ENCODE measurements at regions of chr7 and their contacts with region 1.

Region 1: GRCh38 chr7:142568435-142569097 is 180.7 kb upstream of the PRSS1 start:
- DNase-seq: peak in 1 of 2 experiments; percentile 77
- H3K4me3 ChIP-seq: no peak overlapping the region
- H3K27ac ChIP-seq: peak overlapping the region; percentile 52
- H3K4me1 ChIP-seq: peaks cover 38% of the 10 kb centered on the region
- H3K27me3 ChIP-seq: no peaks in the 10 kb centered on the region
- CTCF ChIP-seq: no peak

Region 2: GRCh38 chr7:142587578-142588191 is 19.1 kb after region 1 on chr7:
- CTCF ChIA-PET with region 1: interaction called, 11 read pairs
- POLR2A ChIA-PET with region 1: no interaction called
- intact Hi-C with region 1: no loop called
- DNase-seq: peak; percentile 30 to 77
- H3K4me3 ChIP-seq: no peak overlapping the region
- H3K27ac ChIP-seq: 0 out of 2 replicates have a peak overlapping the region, but pooled peaks have one; percentile 27
- H3K4me1 ChIP-seq: peaks cover 26% of the 10 kb centered on the region
- H3K27me3 ChIP-seq: no peaks in the 10 kb centered on the region
- CTCF ChIP-seq: peak; percentile 78